Activated CD4-positive, alpha-beta T cell treated with anti-CD3 and anti-CD28 coated beads, Interleukin-2, amount 10 ng/mL, durations not matched to agents 7 days and 5 days (primary cell): ENCODE measurements at regions of chr6 and their contacts with region 1.

Region 1: DNA sequence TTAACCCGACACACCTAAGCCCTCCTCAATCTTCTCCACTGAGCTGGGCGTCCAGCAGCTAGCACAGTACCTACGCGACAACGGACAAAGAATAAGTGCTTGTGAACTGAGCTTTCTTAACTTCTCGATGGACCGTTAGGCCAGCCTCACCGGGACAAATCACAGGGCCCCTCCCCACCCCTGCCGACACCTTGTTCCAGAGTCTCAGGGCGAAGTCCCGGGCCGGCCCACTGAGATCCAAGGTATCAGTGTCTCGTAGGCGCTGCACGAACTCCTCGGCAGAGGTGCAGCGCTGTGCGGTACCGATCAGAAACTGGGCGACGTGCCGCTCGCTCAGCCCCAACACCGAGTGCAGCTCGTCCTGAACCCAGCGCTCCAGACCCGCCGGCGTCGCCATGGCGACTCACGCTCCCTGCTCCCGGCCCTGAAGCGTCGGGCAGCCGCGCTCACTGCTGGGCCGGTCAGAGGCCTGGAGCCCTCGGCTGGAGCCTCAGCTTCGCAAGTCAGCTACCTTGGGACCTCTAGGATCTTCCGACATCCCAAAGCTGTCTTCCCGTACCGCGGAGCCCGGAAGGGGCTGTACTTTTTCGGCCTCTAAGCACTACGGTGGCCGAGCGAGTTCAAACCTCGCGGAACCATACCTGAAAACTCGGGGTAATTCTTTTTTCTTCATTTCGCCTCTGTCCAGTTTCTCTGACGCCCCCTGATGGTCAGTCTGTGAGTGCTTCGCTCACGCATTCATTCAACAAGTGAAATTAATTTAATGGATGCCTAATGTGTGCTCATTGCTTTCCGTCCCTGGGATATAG is at the start of gene DHX16:
- DNase-seq: peak; percentile 96
- H3K4me3 Mint-ChIP-seq: peak within 1 kb of the TSS; percentile 91
- H3K27ac Mint-ChIP-seq: peak within 1 kb of the TSS; percentile 84
- H3K4me1 Mint-ChIP-seq: peaks cover 45% of the 10 kb centered on the region
- H3K27me3 Mint-ChIP-seq: no peaks in the 10 kb centered on the region
- total RNA-seq, gene DHX16: 40.4 to 40.7 TPM

Region 2: GRCh38 chr6:30490026-30490876 is 182.4 kb before region 1 on chr6:
- CTCF ChIA-PET with region 1: no interaction called
- POLR2A ChIA-PET with region 1: no interaction called
- DNase-seq: peak; percentile 86
- H3K4me3 Mint-ChIP-seq: peak overlapping the region; percentile 100
- H3K27ac Mint-ChIP-seq: peak overlapping the region; percentile 96
- H3K4me1 Mint-ChIP-seq: peaks cover 59% of the 10 kb centered on the region
- H3K27me3 Mint-ChIP-seq: no peaks in the 10 kb centered on the region

Region 3: DNA sequence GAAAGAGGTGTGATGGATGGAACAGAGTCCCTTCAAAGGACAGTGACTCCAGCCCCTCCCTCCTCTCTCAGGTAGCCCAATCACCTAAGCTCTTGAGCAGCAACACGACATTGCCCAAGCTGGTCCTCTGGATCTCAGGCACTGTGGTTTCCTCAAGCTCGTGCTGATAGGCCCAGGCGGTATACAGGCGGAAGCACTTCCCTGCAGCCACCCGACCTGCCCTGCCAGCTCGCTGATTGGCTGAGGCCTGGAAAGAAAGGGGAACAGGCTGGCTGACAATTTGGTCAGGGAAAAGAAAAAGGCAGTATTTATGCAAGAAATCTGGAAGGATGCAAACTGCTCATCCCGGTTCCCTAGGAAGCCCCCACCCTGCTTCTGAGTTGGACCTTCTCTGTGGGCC is 16.1 kb before region 1 on chr6:
- CTCF ChIA-PET with region 1: interaction called, 20 read pairs
- POLR2A ChIA-PET with region 1: interaction called, 4 read pairs
- DNase-seq: no peak
- H3K4me3 Mint-ChIP-seq: no peak overlapping the region
- H3K27ac Mint-ChIP-seq: no peak overlapping the region
- H3K4me1 Mint-ChIP-seq: peaks cover 2% of the 10 kb centered on the region
- H3K27me3 Mint-ChIP-seq: no peaks in the 10 kb centered on the region

Region 4: DNA sequence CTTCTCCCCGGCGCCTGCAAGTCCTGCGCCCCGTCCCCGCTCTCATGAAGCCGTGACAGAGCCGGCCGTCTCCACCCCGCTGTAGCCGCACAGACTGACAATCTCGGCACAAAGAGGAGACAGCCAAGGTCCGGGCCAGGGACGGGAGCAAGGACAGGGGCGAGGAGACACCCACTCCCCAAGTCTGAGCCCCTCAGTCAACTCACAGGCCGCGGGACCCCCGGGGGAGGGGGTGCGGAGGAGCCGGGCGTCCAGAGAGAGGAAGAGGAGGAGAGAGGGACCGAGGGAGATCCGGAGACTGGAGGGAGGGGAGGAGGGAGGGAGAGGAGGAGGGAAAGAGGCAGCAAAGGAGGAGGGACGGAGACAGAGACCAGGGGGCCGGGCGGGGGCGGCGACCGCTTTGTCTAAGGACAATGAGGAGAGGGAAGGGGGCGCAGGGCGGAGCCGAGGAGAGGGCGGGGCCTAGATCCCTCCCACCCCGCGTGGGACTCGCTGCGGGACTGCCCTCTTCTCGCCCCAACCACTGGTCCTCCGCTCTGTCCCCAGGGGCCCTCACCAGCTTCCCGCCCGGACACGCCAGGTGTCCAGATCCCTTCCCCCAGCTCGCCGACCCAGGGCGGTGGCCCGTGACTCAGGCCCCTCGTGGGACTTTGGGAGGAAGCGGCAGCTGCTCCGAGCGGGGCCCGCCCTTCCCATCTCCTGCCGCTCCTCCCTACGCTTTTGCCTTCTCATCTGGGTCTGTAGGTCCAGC is 14.4 kb after region 1 on chr6:
- CTCF ChIA-PET with region 1: interaction called, 13 read pairs
- POLR2A ChIA-PET with region 1: no interaction called
- DNase-seq: peak; percentile 87
- H3K4me3 Mint-ChIP-seq: peak overlapping the region; percentile 100
- H3K27ac Mint-ChIP-seq: peak overlapping the region; percentile 95
- H3K4me1 Mint-ChIP-seq: peaks cover 41% of the 10 kb centered on the region
- H3K27me3 Mint-ChIP-seq: no peaks in the 10 kb centered on the region

Region 5: DNA sequence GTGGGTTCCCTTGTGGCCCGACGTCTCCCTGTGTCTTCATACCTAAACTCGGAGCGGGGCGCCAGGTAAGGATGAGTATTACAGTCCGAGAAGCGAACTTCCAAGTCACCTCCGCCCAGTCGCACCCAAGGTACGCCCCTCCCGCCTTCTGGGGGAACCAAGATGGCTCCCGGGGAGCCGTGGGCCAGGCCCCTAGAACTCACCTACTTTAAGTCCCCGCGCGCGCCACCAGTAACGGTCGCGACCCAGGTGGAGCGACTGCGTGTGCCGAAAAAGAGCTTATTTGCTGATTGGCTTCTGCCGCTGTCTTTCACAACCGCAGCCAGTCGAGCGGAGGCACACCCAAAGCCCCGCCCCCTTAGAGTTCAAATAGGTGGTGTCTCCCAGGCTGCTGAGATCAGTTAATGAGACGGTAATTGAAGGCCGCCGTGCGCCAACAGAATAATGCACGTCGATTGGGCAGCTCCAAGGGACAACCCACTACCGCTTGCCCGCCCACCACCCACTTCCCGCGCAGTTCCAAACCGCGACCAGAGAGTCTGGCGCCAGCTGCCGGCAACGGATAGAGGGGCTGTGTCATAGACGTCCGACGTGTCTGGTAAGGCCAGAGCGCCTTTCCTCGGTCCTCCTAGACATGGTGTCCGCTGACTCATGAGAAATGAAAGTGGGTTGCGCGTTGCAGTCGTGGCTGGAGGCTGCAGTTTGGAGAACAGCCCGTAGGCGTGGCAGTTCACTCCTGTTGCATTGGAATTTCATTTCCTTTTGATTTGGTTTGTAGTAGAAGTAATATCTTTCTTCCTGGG is 44.6 kb after region 1 on chr6 and contains the start of gene MDC1:
- CTCF ChIA-PET with region 1: interaction called, 476 read pairs
- POLR2A ChIA-PET with region 1: no interaction called
- DNase-seq: peak; percentile 100
- H3K4me3 Mint-ChIP-seq: peak within 1 kb of the TSS; percentile 97
- H3K27ac Mint-ChIP-seq: peak within 1 kb of the TSS; percentile 98
- H3K4me1 Mint-ChIP-seq: peaks cover 58% of the 10 kb centered on the region
- H3K27me3 Mint-ChIP-seq: no peaks in the 10 kb centered on the region
- total RNA-seq, gene MDC1: 46.8 to 53.2 TPM